CD8-positive, alpha-beta memory T cell (primary cell): ENCODE measurements at regions of chr6 and their contacts with region 1.

Region 1: GRCh38 chr6:27237089-27237803 is 10.3 kb upstream of the PRSS16 start:
- DNase-seq: peak in 1 of 5 donors; percentile 6
- H3K4me3 ChIP-seq: no peak overlapping the region
- H3K4me3 Mint-ChIP-seq: peak overlapping the region in 4 of 7 donors; percentile 20 to 56 (median 35)
- H3K27ac ChIP-seq: peak overlapping the region; percentile 36
- H3K27ac Mint-ChIP-seq: peak overlapping the region in 2 of 8 donors; percentile 37 to 45
- H3K4me1 ChIP-seq: no peaks in the 10 kb centered on the region
- H3K4me1 Mint-ChIP-seq: peaks cover 10 to 29% (median 15%) of the 10 kb centered on the region in 3 donors
- H3K27me3 ChIP-seq: peaks cover 46% of the 10 kb centered on the region
- H3K27me3 Mint-ChIP-seq: peaks cover 73 to 83% of the 10 kb centered on the region in 2 donors

Region 2: GRCh38 chr6:27111743-27112142 is 125.5 kb before region 1 on chr6:
- CTCF ChIA-PET with region 1: no interaction called
- POLR2A ChIA-PET with region 1: no interaction called
- DNase-seq: no peak
- H3K4me3 ChIP-seq: no peak overlapping the region
- H3K4me3 Mint-ChIP-seq: no peak overlapping the region
- H3K27ac ChIP-seq: no peak overlapping the region
- H3K27ac Mint-ChIP-seq: no peak overlapping the region
- H3K4me1 ChIP-seq: no peaks in the 10 kb centered on the region
- H3K4me1 Mint-ChIP-seq: no peaks in the 10 kb centered on the region
- H3K27me3 ChIP-seq: no peaks in the 10 kb centered on the region
- H3K27me3 Mint-ChIP-seq: peaks cover 13 to 64% of the 10 kb centered on the region in 2 donors

Region 3: GRCh38 chr6:27479319-27480182 is 242.3 kb after region 1 on chr6:
- CTCF ChIA-PET with region 1: no interaction called
- POLR2A ChIA-PET with region 1: interaction called, 12 read pairs
- DNase-seq: peak; percentile 75 to 92 (median 87)
- H3K4me3 ChIP-seq: peak overlapping the region; percentile 77
- H3K4me3 Mint-ChIP-seq: no peak overlapping the region
- H3K27ac ChIP-seq: peak overlapping the region; percentile 98
- H3K27ac Mint-ChIP-seq: no peak overlapping the region
- H3K4me1 ChIP-seq: peaks cover 17% of the 10 kb centered on the region
- H3K4me1 Mint-ChIP-seq: peaks cover 0 to 8% (median 4%) of the 10 kb centered on the region in 3 donors
- H3K27me3 ChIP-seq: no peaks in the 10 kb centered on the region
- H3K27me3 Mint-ChIP-seq: no peaks in the 10 kb centered on the region